Activated CD8-positive, alpha-beta T cell treated with anti-CD3 and anti-CD28 coated beads for 36 hours (primary cell): ENCODE measurements at regions of chr1 and their contacts with region 1.

Region 1: DNA sequence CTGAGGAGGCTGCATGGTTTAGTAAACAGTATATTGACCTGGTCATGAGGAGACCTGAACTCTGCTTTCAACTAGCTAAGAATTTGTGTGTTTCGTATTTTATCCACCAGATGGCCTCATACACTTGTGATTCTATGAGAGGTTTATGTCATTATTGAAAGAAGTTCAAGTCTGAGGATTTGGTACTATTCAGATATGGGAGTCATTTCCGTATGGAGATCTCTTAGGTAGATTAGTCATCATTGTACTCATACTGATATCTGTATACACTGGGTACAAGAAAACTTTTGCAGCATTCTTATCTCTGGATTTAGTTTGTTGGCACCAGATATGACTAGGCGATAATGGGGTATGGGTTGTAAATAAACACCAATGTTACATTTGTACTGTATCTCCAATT is 26.6 kb downstream of the ATF6 start:
- DNase-seq: no peak
- ATAC-seq: peak; percentile 77
- H3K4me3 Mint-ChIP-seq: no peak overlapping the region
- H3K27ac Mint-ChIP-seq: no peak overlapping the region
- H3K4me1 Mint-ChIP-seq: peaks cover 5% of the 10 kb centered on the region
- H3K27me3 Mint-ChIP-seq: no peaks in the 10 kb centered on the region
- CTCF ChIP-seq: peak; percentile 73

Region 2: GRCh38 chr1:161766102-161766981 is 26.4 kb before region 1 on chr1 and contains the start of gene ATF6:
- CTCF ChIA-PET with region 1: interaction called, 11 read pairs
- POLR2A ChIA-PET with region 1: no interaction called
- intact Hi-C with region 1: no loop called
- DNase-seq: peak; percentile 88
- ATAC-seq: peak; percentile 80
- H3K4me3 Mint-ChIP-seq: peak within 1 kb of the TSS; percentile 97
- H3K27ac Mint-ChIP-seq: peak within 1 kb of the TSS; percentile 98
- H3K4me1 Mint-ChIP-seq: peaks cover 44% of the 10 kb centered on the region
- H3K27me3 Mint-ChIP-seq: no peaks in the 10 kb centered on the region
- CTCF ChIP-seq: no peak
- total RNA-seq, gene ATF6: 16.9 to 17.3 TPM

Region 3: GRCh38 chr1:161816201-161816600 is 23.5 kb after region 1 on chr1:
- CTCF ChIA-PET with region 1: interaction called, 10 read pairs
- POLR2A ChIA-PET with region 1: no interaction called
- intact Hi-C with region 1: no loop called
- DNase-seq: no peak
- ATAC-seq: no peak
- H3K4me3 Mint-ChIP-seq: no peak overlapping the region
- H3K27ac Mint-ChIP-seq: no peak overlapping the region
- H3K4me1 Mint-ChIP-seq: no peaks in the 10 kb centered on the region
- H3K27me3 Mint-ChIP-seq: no peaks in the 10 kb centered on the region
- CTCF ChIP-seq: no peak

Region 4: DNA sequence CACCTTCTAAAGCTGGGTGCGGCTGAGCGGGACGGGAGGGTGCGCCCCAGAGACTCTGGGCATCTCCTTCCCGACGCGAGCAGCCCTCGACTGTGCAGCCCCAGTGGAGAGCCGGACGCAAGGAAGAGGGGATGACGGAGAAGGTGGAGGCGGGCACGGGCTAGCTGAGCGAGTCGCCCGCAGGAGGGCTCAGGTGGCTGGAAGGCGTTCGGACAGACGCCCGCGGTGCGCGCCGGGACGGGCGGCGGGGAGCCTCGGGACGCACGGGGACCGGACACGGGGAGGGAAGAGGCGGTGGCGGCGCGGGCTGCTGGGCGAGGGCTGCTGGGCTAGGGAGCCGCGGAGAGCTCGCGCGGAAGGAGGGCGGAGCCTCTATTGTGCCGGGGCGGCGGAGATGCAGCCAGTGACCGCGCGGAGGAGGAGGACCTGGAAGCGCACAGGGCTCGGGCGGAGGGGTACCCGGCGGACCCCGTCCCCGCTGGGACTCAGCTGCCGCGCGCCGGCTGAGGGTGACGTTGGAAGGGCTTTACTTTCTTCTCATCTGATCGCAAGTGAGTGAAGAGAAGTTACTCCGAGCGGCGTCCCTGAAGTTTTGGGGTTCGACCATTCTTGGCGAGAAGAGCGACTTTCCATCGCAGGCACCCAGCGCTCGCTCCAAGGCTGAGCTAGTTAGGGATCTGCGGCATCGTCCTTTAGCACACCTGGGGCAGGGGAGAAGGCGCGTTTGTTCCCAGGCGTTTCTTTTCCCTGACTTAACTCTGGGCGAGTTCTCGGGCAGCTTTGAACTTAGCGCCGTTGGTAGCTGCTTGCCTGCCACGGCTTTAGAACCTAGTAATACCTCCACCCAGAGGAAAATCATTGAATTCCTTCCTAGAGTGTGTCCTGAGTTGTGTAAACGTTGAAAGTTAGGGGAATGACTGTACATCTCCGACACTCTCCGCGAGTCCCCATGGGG is 231.1 kb after region 1 on chr1 and contains the start of gene OLFML2B:
- CTCF ChIA-PET with region 1: interaction called, 19 read pairs
- POLR2A ChIA-PET with region 1: no interaction called
- intact Hi-C with region 1: no loop called
- DNase-seq: peak; percentile 58
- ATAC-seq: peak; percentile 90
- H3K4me3 Mint-ChIP-seq: peak within 1 kb of the TSS; percentile 79
- H3K27ac Mint-ChIP-seq: no peak within 1 kb of the TSS
- H3K4me1 Mint-ChIP-seq: peaks cover 6% of the 10 kb centered on the region
- H3K27me3 Mint-ChIP-seq: peaks cover 36% of the 10 kb centered on the region
- CTCF ChIP-seq: no peak
- total RNA-seq, gene OLFML2B: not detected

Region 5: DNA sequence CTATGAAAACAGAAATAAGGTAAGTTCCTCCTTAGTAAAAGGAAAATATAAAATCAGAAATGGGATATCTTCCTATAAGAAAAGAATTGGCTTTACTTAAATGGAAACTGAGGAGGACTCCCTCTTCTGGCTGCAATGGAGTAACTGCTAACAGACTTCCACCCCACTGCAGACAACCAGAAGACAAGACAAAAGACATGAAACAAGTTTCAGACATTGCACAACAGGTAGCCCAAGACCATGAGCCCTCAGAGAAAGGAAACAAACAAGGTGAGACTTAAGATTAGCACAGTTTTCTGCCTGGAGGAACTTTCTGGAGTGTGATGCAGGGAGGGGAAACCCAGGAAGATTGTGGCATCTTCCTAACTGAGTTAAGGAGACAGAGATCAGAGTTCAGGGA is 247.9 kb after region 1 on chr1:
- CTCF ChIA-PET with region 1: interaction called, 166 read pairs
- POLR2A ChIA-PET with region 1: interaction called, 3 read pairs
- intact Hi-C with region 1: loop called (anchors 5 kb)
- DNase-seq: no peak
- ATAC-seq: no peak
- H3K4me3 Mint-ChIP-seq: no peak overlapping the region
- H3K27ac Mint-ChIP-seq: no peak overlapping the region
- H3K4me1 Mint-ChIP-seq: no peaks in the 10 kb centered on the region
- H3K27me3 Mint-ChIP-seq: peaks cover 8% of the 10 kb centered on the region
- CTCF ChIP-seq: no peak